Ovary (tissue), 10 donors: ENCODE measurements at regions of chr12 and their contacts with region 1.

Region 1: DNA sequence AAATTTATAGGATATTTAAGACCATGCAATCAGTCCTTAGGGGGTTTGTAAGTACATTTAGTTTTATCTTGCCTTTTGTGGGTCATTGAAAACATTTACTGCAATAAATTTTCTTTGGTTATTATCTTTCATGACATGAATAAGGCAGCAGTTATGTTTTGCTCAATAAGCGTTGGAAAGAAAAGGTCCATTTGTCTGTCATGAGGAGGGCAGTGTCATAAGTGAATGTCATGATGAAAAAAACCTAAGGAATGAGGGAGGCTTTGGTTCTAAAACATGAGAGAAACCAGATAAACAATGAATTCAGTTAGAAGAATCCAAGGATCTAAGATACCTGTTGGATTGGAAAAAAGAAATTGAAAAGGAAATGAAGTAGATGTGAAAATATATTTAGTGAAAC is 209.4 kb downstream of the NAV3 start:
- DNase-seq: no peak
- H3K4me3 ChIP-seq: no peak overlapping the region
- H3K27ac ChIP-seq: no peak overlapping the region
- H3K4me1 ChIP-seq: no peaks in the 10 kb centered on the region
- H3K27me3 ChIP-seq: no peaks in the 10 kb centered on the region
- CTCF ChIP-seq: no peak
- EP300 ChIP-seq: no peak
- POLR2A ChIP-seq: no peak

Region 2: GRCh38 chr12:76533331-76533730 is 1506.8 kb before region 1 on chr12:
- intact Hi-C with region 1: loop called in 1 of 4 experiments (anchors 5 kb)
- DNase-seq: no peak
- H3K4me3 ChIP-seq: no peak overlapping the region
- H3K27ac ChIP-seq: no peak overlapping the region
- H3K4me1 ChIP-seq: peaks cover 3% of the 10 kb centered on the region
- H3K27me3 ChIP-seq: no peaks in the 10 kb centered on the region
- CTCF ChIP-seq: no peak
- EP300 ChIP-seq: no peak
- POLR2A ChIP-seq: no peak

Region 3: DNA sequence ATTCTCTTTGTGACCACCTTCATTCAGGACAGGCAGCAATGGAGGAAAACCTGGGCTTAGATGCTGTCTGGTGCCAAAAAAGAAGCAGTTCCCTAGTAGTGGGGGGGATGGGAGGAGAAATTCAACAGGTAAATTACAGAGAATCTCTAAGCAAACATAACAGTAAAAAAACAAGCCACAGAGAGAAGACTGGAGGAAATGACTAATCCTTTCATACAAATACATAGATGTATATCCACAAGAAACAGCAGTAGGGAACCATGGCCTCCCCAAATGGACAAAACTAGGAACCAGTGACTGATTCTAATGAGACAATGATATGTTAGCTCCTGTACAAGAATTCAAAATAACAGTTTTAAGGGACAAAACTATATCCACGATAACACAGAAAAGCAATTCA is 303.5 kb after region 1 on chr12:
- intact Hi-C with region 1: no loop called
- DNase-seq: no peak
- H3K4me3 ChIP-seq: no peak overlapping the region
- H3K27ac ChIP-seq: no peak overlapping the region
- H3K4me1 ChIP-seq: no peaks in the 10 kb centered on the region
- H3K27me3 ChIP-seq: no peaks in the 10 kb centered on the region
- CTCF ChIP-seq: no peak
- EP300 ChIP-seq: no peak
- POLR2A ChIP-seq: no peak

Region 4: DNA sequence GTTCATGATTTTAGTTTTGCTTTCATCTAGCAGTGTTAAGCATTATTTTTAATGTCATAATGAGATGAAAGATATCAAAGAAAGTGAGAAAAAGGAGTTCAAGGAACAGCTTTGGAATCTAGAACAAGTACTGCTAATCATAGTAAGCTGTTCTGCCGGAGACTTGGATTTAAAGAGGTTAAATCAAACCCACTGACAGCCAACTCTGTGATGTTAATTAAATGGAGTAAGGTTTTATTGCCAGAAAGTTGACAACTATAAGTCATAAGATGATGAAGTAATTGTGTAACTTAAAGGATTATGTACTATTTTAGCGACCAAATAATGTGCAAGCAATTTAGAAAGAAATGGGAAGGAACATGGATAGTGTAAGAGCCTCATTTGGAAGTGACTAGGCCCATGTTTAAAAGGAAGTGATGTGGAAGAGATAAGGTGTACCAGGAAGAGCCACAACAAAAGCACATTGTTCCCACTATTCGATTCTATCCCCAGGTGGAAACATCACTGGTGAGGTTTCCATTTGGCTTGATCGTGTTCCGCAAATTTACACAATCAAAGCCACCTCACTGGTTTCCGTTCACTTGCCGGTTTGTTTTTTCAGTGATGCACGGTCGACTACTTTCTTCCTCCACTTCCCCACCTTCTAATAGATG is 1262.2 kb after region 1 on chr12:
- intact Hi-C with region 1: no loop called
- DNase-seq: peak in 1 of 5 donors; percentile 15
- H3K4me3 ChIP-seq: no peak overlapping the region
- H3K27ac ChIP-seq: no peak overlapping the region
- H3K4me1 ChIP-seq: no peaks in the 10 kb centered on the region
- H3K27me3 ChIP-seq: no peaks in the 10 kb centered on the region
- CTCF ChIP-seq: no peak
- EP300 ChIP-seq: no peak
- POLR2A ChIP-seq: no peak